ENCODE measurements at regions of chr5 and their contacts with region 1.

Region 1: GRCh38 chr5:168987543-168988300 is 313.2 kb downstream of the SLIT3 start:
- DNase-seq: peak; percentile 25 to 94 (median 84)

Region 2: DNA sequence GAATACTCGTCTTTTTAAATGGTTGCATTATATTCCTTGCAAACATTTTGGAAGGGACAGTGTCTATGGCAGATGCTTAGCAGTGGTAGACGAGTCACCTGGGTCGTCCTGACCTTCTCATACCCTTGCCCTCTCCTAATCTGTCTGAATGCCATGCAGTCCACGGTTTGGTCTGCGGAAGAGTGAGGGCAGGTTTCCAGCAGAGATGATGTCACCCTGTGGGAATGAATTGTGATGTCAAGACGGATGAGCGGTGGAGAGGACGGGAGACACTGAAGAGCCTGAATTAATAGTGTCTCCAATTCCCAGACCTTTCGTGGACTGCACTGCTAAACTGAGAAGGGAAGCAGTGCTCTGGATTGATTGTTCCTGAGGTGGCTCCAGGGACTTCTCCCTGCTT is 79.5 kb before region 1 on chr5:
- intact Hi-C with region 1: no loop called
- DNase-seq: no peak

Region 3: DNA sequence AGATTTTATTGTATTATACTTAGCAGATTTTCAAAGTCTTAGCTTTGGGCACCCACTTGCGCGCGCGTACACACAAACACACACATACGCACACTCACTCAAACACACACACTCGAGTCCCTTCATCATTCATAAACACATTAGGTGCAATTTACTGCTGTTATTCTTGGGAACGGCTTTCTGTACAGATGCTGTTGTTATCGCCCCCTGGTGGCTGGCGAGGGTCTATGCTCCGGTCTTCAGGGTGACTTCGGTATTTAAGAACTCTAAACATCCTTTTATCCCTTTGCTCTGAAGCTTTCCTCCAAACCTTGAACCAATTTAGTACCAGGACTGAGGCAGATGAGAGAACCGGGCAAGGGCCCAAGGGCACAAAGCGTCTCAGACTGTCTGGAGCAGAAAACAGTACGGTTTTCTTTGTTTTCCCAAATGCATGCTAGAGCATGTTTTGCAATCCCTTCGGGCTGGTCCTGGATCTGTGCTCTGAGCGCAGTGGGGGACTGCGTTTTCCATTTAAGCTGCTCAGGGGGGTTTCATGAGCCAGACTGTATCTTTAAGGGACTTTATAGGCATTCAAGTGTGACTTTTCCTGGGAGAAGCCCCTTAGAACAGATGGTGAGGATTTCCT is 314.9 kb after region 1 on chr5:
- intact Hi-C with region 1: loop called (anchors 5 kb)
- DNase-seq: peak; percentile 60 to 93 (median 84)

Region 4: DNA sequence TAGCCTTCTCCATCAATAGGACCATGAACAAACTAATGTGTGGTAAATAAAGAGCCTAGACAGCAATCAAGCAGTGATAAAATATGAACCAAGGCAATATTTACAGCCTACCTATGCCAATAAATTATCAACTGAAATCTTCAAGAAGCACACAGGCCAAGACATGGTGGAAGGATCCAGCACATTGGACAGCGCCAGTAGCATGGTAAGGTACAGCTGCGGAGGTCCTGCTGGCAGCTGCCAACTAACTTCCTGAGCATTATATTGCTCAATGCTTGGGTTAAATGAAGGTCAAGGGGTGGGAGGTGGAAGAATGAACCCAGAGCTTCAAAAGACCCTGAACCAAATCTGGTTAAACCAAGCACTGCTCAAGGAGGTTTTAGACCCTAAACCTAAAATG is 579.4 kb after region 1 on chr5:
- intact Hi-C with region 1: loop called (anchors 10 kb)
- DNase-seq: no peak

Measured in head of caudate nucleus (tissue), 42 donors.